ENCODE measurements at regions of chr11 and their contacts with region 1.

Region 1: DNA sequence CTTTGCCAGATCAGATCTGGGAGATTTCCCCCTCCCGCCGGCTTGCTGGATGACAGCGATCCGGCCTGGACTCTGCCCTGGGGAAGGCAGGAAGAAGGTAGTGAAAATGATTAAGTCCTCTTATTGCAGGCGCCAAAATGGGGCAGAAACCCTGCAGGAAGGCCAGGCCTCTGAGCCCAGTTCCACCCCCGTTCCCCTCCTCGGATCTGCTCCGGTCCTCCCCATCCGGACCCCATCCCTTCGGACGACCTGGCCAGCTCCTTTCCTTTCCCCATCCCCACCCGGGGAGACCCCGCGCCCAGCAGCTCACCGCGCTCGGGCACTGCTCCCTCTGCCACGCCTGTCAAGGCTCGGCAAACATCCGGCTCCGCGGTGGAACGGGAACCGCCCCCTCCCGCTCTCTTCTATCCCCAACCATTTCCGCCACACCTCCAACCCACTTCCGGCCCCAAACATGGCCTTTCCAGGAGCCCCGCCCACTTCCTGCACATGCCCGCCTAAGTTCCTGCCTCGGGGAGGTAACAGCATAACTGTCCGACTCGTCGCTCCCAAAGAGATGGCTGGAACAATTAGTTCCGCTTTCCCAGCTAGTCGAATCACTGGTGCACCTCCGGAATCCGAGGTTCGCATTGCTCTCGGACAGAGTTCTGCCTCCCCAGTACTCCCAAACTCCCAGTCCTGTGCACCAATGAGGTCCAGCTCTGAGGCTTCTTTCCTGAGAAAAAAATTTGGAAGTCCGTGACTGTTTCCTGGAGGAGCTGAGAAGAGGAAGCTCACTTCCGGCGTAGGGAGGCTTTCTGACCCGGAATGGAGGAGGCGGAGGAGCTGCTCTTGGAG is at the starts of genes ARHGAP1 and ZNF408:
- DNase-seq: peak; percentile 98 to 100 (median 99)
- ATAC-seq: peak; percentile 93
- H3K4me3 ChIP-seq: peak within 1 kb of the TSS; percentile 84
- H3K4me3 Mint-ChIP-seq: peak within 1 kb of the TSS; percentile 96
- H3K27ac ChIP-seq: peak within 1 kb of the TSS; percentile 72 to 78
- H3K27ac Mint-ChIP-seq: peak within 1 kb of the TSS; percentile 87
- H3K4me1 ChIP-seq: peaks cover 62% of the 10 kb centered on the region
- H3K4me1 Mint-ChIP-seq: peaks cover 62% of the 10 kb centered on the region
- H3K27me3 ChIP-seq: no peaks in the 10 kb centered on the region
- H3K27me3 Mint-ChIP-seq: no peaks in the 10 kb centered on the region
- CTCF ChIP-seq: no peak
- total RNA-seq, gene ARHGAP1: 33.7 to 36.3 TPM
- total RNA-seq, gene ZNF408: 22.7 to 23.0 TPM

Region 2: GRCh38 chr11:46616998-46617675 is 83.3 kb before region 1 on chr11 and contains the starts of genes ATG13 and HARBI1:
- CTCF ChIA-PET with region 1: interaction called, 5 read pairs
- POLR2A ChIA-PET with region 1: interaction called, 21 read pairs
- intact Hi-C with region 1: loop called in 1 of 2 experiments (anchors 2 kb)
- DNase-seq: peak; percentile 84 to 96 (median 90)
- ATAC-seq: peak; percentile 92
- H3K4me3 ChIP-seq: peak within 1 kb of the TSS; percentile 76
- H3K4me3 Mint-ChIP-seq: peak within 1 kb of the TSS; percentile 100
- H3K27ac ChIP-seq: peak within 1 kb of the TSS; percentile 98 to 99
- H3K27ac Mint-ChIP-seq: peak within 1 kb of the TSS; percentile 97
- H3K4me1 ChIP-seq: peaks cover 45% of the 10 kb centered on the region
- H3K4me1 Mint-ChIP-seq: peaks cover 48% of the 10 kb centered on the region
- H3K27me3 ChIP-seq: no peaks in the 10 kb centered on the region
- H3K27me3 Mint-ChIP-seq: no peaks in the 10 kb centered on the region
- CTCF ChIP-seq: no peak
- total RNA-seq, gene ATG13: 95.7 to 102 TPM
- total RNA-seq, gene HARBI1: 18.2 to 18.7 TPM

Region 3: GRCh38 chr11:46675288-46675851 is 25.1 kb before region 1 on chr11:
- CTCF ChIA-PET with region 1: interaction called, 4 read pairs
- POLR2A ChIA-PET with region 1: interaction called, 146 read pairs
- intact Hi-C with region 1: loop called in 1 of 2 experiments (anchors 1 kb)
- DNase-seq: peak in 2 of 14 experiments; percentile 44 to 52
- ATAC-seq: no peak
- H3K4me3 ChIP-seq: no peak overlapping the region
- H3K4me3 Mint-ChIP-seq: no peak overlapping the region
- H3K27ac ChIP-seq: peak overlapping the region; percentile 32 to 59
- H3K27ac Mint-ChIP-seq: peak overlapping the region; percentile 80
- H3K4me1 ChIP-seq: peaks cover 75% of the 10 kb centered on the region
- H3K4me1 Mint-ChIP-seq: peaks cover 66% of the 10 kb centered on the region
- H3K27me3 ChIP-seq: no peaks in the 10 kb centered on the region
- H3K27me3 Mint-ChIP-seq: no peaks in the 10 kb centered on the region
- CTCF ChIP-seq: no peak

Region 4: GRCh38 chr11:47185305-47186075 is 485.0 kb after region 1 on chr11:
- CTCF ChIA-PET with region 1: no interaction called
- POLR2A ChIA-PET with region 1: no interaction called
- intact Hi-C with region 1: no loop called
- DNase-seq: peak in 1 of 14 experiments; percentile 31
- ATAC-seq: no peak
- H3K4me3 ChIP-seq: peak overlapping the region; percentile 41
- H3K4me3 Mint-ChIP-seq: no peak overlapping the region
- H3K27ac ChIP-seq: no peak overlapping the region
- H3K27ac Mint-ChIP-seq: no peak overlapping the region
- H3K4me1 ChIP-seq: peaks cover 24% of the 10 kb centered on the region
- H3K4me1 Mint-ChIP-seq: peaks cover 6% of the 10 kb centered on the region
- H3K27me3 ChIP-seq: peaks cover 40 to 43% of the 10 kb centered on the region in 2 experiments
- H3K27me3 Mint-ChIP-seq: peaks cover 35% of the 10 kb centered on the region
- CTCF ChIP-seq: no peak

Region 5: GRCh38 chr11:47213985-47214564 is 513.6 kb after region 1 on chr11:
- CTCF ChIA-PET with region 1: no interaction called
- POLR2A ChIA-PET with region 1: interaction called, 3 read pairs
- intact Hi-C with region 1: loop called in 1 of 2 experiments (anchors 5 kb)
- DNase-seq: peak; percentile 68 to 92 (median 78)
- ATAC-seq: peak; percentile 70
- H3K4me3 ChIP-seq: peak overlapping the region; percentile 67
- H3K4me3 Mint-ChIP-seq: peak overlapping the region; percentile 100
- H3K27ac ChIP-seq: peak overlapping the region; percentile 80 to 91
- H3K27ac Mint-ChIP-seq: peak overlapping the region; percentile 97
- H3K4me1 ChIP-seq: peaks cover 32% of the 10 kb centered on the region
- H3K4me1 Mint-ChIP-seq: peaks cover 38% of the 10 kb centered on the region
- H3K27me3 ChIP-seq: no peaks in the 10 kb centered on the region
- H3K27me3 Mint-ChIP-seq: no peaks in the 10 kb centered on the region
- CTCF ChIP-seq: no peak

Region 6: DNA sequence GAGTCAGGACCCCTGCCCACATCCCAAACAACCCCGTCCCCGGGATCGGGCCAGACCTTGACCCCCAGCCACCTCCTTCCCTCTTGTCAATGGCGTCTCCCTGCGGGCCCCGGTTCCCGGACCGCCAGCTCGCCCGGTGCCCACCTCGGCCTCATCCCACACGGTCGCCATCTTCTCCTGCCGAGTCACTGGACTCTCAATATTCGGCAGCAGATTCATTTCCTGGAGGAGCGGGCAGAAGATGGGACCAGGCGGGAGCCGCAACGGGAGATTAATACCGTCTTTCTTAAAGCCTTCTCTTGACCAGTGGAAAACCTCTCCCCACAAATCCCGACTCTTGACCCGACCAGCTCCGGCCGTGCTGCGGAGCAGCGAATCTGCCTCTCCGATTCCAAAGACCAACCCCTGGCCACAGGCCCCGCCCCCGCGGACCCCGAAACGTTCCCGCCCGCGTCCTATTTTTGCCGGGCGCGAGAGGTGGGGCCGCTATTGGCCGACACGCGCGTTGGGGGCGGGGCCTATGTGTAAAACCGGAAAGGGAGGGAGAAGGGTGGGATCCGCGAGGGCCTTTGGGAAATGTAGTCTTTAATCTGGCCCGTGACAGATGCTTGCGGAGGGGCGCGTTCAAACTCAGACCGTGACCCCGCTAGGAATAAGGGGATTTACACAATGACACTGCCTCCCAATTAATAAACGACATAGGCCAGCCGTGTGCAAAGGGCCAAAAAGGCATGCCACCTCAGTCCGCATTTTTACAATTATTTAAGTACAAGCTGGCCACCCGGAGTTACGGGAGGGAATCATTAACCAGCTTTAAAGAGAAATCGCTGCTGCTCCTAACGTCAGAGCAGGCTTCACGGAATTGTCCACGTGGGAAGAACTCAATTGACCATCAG is 725.9 kb after region 1 on chr11 and contains the start of gene PSMC3:
- CTCF ChIA-PET with region 1: no interaction called
- POLR2A ChIA-PET with region 1: no interaction called
- intact Hi-C with region 1: loop called in 1 of 2 experiments (anchors 5 kb)
- DNase-seq: peak; percentile 93 to 99 (median 98)
- ATAC-seq: peak; percentile 98
- H3K4me3 ChIP-seq: peak within 1 kb of the TSS; percentile 100
- H3K4me3 Mint-ChIP-seq: peak within 1 kb of the TSS; percentile 100
- H3K27ac ChIP-seq: peak within 1 kb of the TSS; percentile 84
- H3K27ac Mint-ChIP-seq: peak within 1 kb of the TSS; percentile 90
- H3K4me1 ChIP-seq: peaks cover 30% of the 10 kb centered on the region
- H3K4me1 Mint-ChIP-seq: peaks cover 25% of the 10 kb centered on the region
- H3K27me3 ChIP-seq: no peaks in the 10 kb centered on the region
- H3K27me3 Mint-ChIP-seq: no peaks in the 10 kb centered on the region
- CTCF ChIP-seq: no peak
- total RNA-seq, gene PSMC3: 51.3 to 59.5 TPM